ENCODE measurements at regions of chr12 and their contacts with region 1.

Region 1: DNA sequence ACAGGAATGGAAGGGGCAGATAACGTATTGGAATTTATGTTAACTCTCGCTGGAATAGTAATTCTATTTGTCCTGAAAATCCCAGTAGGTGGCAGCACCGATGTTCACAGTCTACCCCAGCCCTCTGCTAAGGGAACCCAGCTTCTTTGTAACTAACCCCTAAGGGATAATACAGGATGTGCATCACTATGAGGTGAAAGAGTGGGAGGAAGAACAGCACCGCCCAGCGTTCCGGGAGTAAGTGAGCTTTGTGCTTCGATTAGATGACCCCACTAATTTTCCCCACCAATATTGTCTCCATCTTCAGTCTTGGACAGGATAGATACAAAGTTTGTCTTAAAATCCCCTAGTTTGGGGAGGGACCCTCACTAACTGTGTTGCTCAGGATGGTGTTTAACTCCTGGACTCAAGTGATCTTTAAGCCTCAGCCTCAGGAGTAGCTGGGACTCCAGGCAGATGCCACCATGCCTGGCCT is 2.7 kb downstream of the SLC2A3 start:
- DNase-seq: peak; percentile 93 to 95 (median 93)
- H3K4me3 ChIP-seq: peak overlapping the region in 6 of 7 experiments; percentile 19 to 98 (median 74)
- H3K27ac ChIP-seq: peak overlapping the region in 1 of 2 experiments; percentile 85
- H3K4me1 ChIP-seq: peaks cover 16 to 45% (median 35%) of the 10 kb centered on the region in 4 experiments
- H3K27me3 ChIP-seq: no peaks in the 10 kb centered on the region

Region 2: GRCh38 chr12:7948589-7949260 is 15.4 kb after region 1 on chr12:
- CTCF ChIA-PET with region 1: interaction called, 11 read pairs
- POLR2A ChIA-PET with region 1: interaction called, 7 read pairs
- DNase-seq: peak in 2 of 3 donors; percentile 69 to 81
- H3K4me3 ChIP-seq: no peak overlapping the region
- H3K27ac ChIP-seq: peak overlapping the region in 1 of 2 experiments; percentile 38
- H3K4me1 ChIP-seq: peaks cover 7 to 24% (median 12%) of the 10 kb centered on the region in 4 experiments
- H3K27me3 ChIP-seq: no peaks in the 10 kb centered on the region

Region 3: GRCh38 chr12:7970475-7971252 is 37.4 kb after region 1 on chr12:
- CTCF ChIA-PET with region 1: interaction called, 242 read pairs
- POLR2A ChIA-PET with region 1: no interaction called
- DNase-seq: peak; percentile 82 to 90 (median 88)
- H3K4me3 ChIP-seq: peak overlapping the region; percentile 37 to 85 (median 70)
- H3K27ac ChIP-seq: peak overlapping the region; percentile 46 to 80
- H3K4me1 ChIP-seq: peaks cover 6 to 32% (median 24%) of the 10 kb centered on the region in 4 experiments
- H3K27me3 ChIP-seq: no peaks in the 10 kb centered on the region

Region 4: DNA sequence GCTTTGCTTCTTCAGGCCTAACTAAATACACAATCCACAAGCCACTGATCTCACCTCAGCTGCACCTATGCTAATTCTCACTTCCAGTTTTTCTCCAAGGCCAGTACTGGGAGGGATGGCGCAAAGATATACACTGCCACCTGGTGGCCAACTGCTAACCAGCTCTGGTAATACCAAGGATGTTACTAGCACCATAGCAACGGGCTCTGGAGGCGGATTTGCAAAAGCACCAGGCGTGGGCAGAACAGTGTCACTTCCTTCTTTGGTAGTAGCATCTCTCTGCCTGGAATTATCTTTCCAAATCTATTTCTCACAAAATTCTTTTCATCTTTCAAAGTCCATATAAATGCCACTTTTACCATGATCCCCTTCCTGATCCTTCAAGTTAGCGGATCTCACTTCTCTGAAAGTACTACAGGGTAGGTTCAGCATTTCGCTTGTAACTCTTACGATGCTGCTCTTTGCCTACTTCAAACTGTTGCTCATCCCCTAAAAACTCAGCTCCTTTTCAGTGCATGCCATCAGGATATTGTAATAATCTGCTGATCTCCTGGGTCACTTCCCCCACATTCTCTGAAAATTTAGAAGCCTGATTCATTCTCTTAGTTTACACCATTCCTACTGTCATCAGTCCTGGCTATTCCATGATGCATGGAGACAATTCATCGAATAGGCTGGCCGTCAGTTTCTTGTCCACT is 62.1 kb after region 1 on chr12:
- CTCF ChIA-PET with region 1: interaction called, 63 read pairs
- POLR2A ChIA-PET with region 1: interaction called, 13 read pairs
- DNase-seq: peak; percentile 81 to 95 (median 92)
- H3K4me3 ChIP-seq: no peak overlapping the region
- H3K27ac ChIP-seq: no peak overlapping the region
- H3K4me1 ChIP-seq: peaks cover 5 to 21% (median 11%) of the 10 kb centered on the region in 4 experiments
- H3K27me3 ChIP-seq: no peaks in the 10 kb centered on the region

Region 5: GRCh38 chr12:8078398-8078797 is 145.1 kb after region 1 on chr12:
- CTCF ChIA-PET with region 1: interaction called, 12 read pairs
- POLR2A ChIA-PET with region 1: no interaction called
- DNase-seq: peak; percentile 87 to 94 (median 92)
- H3K4me3 ChIP-seq: no peak overlapping the region
- H3K27ac ChIP-seq: no peak overlapping the region
- H3K4me1 ChIP-seq: peaks cover 19 to 41% (median 34%) of the 10 kb centered on the region in 4 experiments
- H3K27me3 ChIP-seq: no peaks in the 10 kb centered on the region

Region 6: DNA sequence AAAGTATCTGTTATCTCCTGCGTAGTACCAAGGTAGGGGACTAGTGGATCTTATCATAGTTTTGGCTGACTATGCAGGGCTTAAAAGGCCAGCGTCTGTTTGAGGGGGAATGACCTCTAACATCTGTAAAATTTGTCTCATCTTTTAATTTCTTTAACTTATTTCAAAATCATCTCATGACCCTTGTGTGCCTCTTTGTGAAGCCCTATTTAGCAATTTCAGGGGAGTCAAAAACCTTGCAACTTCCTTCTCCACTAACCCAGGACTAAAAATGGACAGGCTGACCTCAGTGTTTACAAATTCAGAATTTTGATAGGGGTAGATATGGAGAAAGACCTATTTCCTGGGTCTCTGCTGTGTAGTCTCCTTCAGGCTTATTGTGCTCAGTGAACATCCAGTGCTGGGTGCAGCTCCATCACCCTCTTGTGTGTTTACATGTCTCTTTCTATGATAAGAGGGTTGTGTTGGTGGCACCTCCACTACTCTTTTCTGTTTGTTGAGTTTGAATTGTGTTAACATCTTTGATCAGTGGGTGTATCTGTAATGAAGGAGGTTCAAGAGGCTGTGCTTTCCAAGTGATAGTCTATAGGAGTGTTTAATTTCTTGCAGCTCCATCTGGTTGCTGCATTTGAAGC is 163.1 kb after region 1 on chr12:
- CTCF ChIA-PET with region 1: no interaction called
- POLR2A ChIA-PET with region 1: no interaction called
- DNase-seq: no peak
- H3K4me3 ChIP-seq: no peak overlapping the region
- H3K27ac ChIP-seq: no peak overlapping the region
- H3K4me1 ChIP-seq: no peaks in the 10 kb centered on the region
- H3K27me3 ChIP-seq: no peaks in the 10 kb centered on the region